ENCODE measurements at regions of chr4 and their contacts with region 1.

Region 1: DNA sequence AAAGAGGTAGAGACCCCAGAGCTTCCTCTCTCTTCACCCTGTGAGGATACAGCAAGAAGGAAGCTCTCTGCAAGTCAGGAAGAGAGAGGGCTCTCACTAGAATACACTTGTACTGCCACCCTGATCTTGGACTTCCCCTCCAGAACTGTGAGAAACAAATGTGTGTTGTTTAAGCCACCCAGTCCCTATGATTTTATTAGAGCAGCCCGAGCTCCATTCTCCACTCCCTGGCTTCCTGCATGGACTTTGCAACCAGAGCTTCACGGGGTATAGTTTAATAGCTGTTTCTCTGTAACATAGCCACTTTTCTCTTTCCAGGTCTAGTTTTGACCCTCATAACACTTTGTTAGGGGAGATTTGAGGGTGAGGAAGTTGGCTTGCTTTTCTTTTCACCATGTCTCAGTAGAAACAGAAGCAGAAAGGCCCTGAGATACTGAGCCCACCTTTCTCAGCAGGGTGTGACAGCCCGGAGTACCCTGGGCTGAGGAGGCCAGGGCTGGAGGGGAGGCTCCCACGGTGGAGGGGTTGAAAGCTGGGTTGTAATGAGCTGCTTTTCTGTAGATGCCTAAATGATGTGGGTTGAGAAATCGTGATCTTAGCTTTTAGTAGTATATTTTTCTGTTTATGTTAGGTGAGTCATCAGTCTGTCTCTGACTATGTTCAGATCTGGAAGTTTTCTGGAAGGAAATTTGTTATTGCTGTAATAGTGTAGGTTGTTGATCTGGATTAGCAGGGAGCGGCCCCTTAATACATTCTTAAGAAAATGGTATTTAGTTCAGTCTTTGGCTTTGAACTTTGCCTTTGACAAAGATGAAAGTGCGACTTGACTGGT is 118.6 kb downstream of the PTTG2 start:
- DNase-seq: peak; percentile 50
- H3K4me3 Mint-ChIP-seq: no peak overlapping the region
- H3K27ac Mint-ChIP-seq: peak overlapping the region; percentile 75
- H3K4me1 Mint-ChIP-seq: peaks cover 37% of the 10 kb centered on the region
- H3K27me3 Mint-ChIP-seq: no peaks in the 10 kb centered on the region

Region 2: GRCh38 chr4:37953620-37954293 is 125.0 kb before region 1 on chr4:
- CTCF ChIA-PET with region 1: no interaction called
- POLR2A ChIA-PET with region 1: no interaction called
- intact Hi-C with region 1: no loop called
- DNase-seq: no peak
- H3K4me3 Mint-ChIP-seq: no peak overlapping the region
- H3K27ac Mint-ChIP-seq: no peak overlapping the region
- H3K4me1 Mint-ChIP-seq: peaks cover 13% of the 10 kb centered on the region
- H3K27me3 Mint-ChIP-seq: no peaks in the 10 kb centered on the region

Region 3: GRCh38 chr4:38091636-38092035 is 12.8 kb after region 1 on chr4:
- CTCF ChIA-PET with region 1: interaction called, 9 read pairs
- POLR2A ChIA-PET with region 1: interaction called, 20 read pairs
- intact Hi-C with region 1: loop called (anchors 1 kb)
- DNase-seq: no peak
- H3K4me3 Mint-ChIP-seq: peak overlapping the region; percentile 50
- H3K27ac Mint-ChIP-seq: peak overlapping the region; percentile 88
- H3K4me1 Mint-ChIP-seq: peaks cover 42% of the 10 kb centered on the region
- H3K27me3 Mint-ChIP-seq: no peaks in the 10 kb centered on the region

Region 4: DNA sequence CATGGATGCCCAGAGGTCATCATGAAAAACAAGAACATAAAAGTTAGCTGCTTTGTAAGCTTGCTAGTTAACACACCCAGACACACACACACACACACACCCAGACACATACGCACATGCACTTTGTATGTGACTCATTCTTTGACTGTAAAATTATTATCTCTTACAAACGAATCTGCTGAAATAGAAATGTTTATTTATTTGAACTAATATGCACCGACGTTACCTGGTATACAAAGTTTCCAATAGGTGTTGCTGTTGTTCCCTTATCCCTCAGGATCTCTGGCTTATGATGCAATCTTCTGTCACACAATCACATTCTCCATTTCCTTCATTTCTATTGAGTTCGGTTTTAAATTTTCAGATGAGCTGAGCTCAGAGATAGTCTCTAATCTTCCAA is 90.7 kb after region 1 on chr4:
- CTCF ChIA-PET with region 1: no interaction called
- POLR2A ChIA-PET with region 1: no interaction called
- intact Hi-C with region 1: no loop called
- DNase-seq: no peak
- H3K4me3 Mint-ChIP-seq: no peak overlapping the region
- H3K27ac Mint-ChIP-seq: no peak overlapping the region
- H3K4me1 Mint-ChIP-seq: peaks cover 33% of the 10 kb centered on the region
- H3K27me3 Mint-ChIP-seq: no peaks in the 10 kb centered on the region

Region 5: DNA sequence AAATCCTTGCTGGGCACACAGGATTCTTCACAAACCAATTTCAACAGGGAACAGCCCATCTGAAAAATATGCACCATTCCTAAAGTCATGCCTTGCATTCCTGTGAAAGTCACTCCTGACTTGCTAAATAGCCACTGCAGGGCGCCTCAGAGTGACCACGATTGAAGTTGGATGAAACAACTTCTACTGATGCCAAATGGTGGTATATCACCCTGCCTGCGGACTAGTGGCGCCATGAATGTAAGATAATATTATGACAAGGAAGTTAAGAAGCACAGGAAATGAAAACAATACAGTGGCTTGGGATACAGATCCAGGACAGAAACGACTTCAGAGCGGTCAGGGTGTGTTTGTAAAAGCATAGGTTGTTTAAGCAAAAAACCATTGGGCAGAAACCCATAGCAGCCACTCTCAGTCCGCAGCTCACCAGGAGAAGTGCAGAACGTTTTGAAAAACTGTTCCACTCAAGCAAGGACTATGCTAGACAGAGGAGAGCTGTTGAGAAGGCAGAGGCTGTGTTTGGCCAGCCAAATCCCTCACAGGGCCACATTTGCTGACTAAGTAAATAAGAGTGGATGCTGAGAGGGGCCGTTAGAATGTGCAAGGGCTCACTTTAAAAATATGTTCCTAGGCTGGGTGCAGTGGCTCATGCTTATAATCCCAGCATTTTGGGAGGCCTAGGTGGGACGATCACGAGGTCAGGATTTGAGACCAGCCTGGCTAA is 131.7 kb after region 1 on chr4:
- CTCF ChIA-PET with region 1: no interaction called
- POLR2A ChIA-PET with region 1: no interaction called
- intact Hi-C with region 1: no loop called
- DNase-seq: no peak
- H3K4me3 Mint-ChIP-seq: no peak overlapping the region
- H3K27ac Mint-ChIP-seq: no peak overlapping the region
- H3K4me1 Mint-ChIP-seq: no peaks in the 10 kb centered on the region
- H3K27me3 Mint-ChIP-seq: no peaks in the 10 kb centered on the region

Region 6: DNA sequence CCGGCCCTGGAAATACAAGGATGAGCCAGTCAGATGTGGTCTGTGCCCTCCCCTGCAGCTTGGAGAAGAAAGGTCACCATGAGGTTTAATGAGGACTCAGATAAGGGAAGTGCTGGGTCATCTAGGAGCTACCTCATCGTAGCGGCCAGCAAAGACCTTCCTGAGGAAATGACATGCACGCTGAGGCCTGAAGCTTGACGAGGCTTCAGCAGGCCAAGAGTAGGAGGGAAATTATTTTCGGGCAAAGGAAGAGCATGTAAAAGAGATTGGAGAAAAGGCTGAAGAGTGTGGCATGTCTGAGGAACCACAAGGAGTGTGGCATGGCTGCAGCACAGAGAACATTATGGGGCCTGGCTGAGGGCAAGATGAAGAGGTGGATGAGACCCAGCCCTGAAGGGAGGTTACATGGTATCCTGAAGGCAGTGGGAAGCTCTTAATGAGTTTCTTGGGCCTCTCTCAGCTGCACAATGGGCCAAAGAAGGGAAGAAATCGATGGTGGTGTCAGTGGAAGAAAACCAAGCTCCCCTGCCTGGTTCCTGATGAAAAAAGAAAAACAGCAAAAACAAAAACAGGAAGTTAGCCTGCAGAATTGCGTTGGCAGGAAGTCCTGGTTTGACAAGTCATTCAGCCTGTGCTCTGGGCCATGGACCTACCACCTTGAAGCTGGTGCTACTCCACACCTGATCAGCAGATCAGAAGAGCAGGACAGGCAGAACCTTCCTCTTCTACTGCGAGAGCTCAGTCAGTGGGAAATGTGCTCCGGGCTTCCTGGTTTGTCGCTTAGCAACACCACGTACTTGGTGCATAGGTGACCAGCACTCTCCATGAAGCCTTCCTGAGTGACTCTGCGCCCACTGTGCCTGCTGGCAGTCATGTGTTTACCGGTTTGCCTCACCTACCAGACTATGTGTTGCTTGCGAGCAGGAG is 450.6 kb after region 1 on chr4:
- CTCF ChIA-PET with region 1: interaction called, 4 read pairs
- POLR2A ChIA-PET with region 1: no interaction called
- intact Hi-C with region 1: loop called (anchors 10 kb)
- DNase-seq: peak; percentile 88
- H3K4me3 Mint-ChIP-seq: peak overlapping the region; percentile 15
- H3K27ac Mint-ChIP-seq: peak overlapping the region; percentile 85
- H3K4me1 Mint-ChIP-seq: peaks cover 42% of the 10 kb centered on the region
- H3K27me3 Mint-ChIP-seq: peaks cover 11% of the 10 kb centered on the region

Measured in activated CD4-positive, alpha-beta memory T cell treated with anti-CD3 and anti-CD28 coated beads for 36 hours (primary cell).